Activated CD4-positive, alpha-beta memory T cell treated with anti-CD3 and anti-CD28 coated beads, Interleukin-2, amount 10 ng/mL, durations not matched to agents 7 days and 5 days (primary cell): ENCODE measurements at regions of chr6 and their contacts with region 1.

Region 1: GRCh38 chr6:16731478-16732051 is 29.7 kb downstream of the ATXN1 start:
- DNase-seq: peak; percentile 63
- H3K4me3 Mint-ChIP-seq: peak overlapping the region; percentile 61
- H3K27ac Mint-ChIP-seq: peak overlapping the region; percentile 86
- H3K4me1 Mint-ChIP-seq: peaks cover 75% of the 10 kb centered on the region
- H3K27me3 Mint-ChIP-seq: no peaks in the 10 kb centered on the region

Region 2: DNA sequence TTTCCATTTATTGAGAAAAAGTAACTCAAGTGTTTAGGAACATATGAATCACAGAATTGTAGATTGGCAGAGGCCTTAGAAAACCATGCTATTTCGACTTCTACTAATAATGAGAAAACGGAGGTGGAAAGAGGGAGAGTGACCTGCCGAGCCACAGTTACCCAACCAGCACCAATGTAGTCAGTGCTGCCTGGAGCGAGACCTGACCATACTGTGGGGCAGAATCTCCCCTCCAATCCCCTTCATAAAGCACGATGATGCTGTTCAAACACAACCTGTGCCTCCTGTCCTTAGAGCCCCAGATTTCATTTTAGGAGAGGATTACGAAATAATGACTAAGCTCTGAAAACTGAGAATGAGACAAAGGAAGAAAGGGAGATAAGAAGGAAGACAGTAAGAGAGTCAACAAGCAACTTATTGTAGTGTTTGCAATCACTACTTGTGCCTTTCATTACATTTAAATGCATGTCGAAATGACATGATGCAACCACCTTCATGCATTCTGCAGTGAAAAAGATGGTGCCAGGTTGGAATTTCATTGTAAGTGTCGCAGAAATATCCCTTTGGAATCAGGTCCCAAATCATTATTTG is 40.9 kb before region 1 on chr6:
- CTCF ChIA-PET with region 1: no interaction called
- POLR2A ChIA-PET with region 1: interaction called, 62 read pairs
- DNase-seq: peak; percentile 51
- H3K4me3 Mint-ChIP-seq: peak overlapping the region; percentile 2
- H3K27ac Mint-ChIP-seq: peak overlapping the region; percentile 70
- H3K4me1 Mint-ChIP-seq: peaks cover 86% of the 10 kb centered on the region
- H3K27me3 Mint-ChIP-seq: no peaks in the 10 kb centered on the region

Region 3: DNA sequence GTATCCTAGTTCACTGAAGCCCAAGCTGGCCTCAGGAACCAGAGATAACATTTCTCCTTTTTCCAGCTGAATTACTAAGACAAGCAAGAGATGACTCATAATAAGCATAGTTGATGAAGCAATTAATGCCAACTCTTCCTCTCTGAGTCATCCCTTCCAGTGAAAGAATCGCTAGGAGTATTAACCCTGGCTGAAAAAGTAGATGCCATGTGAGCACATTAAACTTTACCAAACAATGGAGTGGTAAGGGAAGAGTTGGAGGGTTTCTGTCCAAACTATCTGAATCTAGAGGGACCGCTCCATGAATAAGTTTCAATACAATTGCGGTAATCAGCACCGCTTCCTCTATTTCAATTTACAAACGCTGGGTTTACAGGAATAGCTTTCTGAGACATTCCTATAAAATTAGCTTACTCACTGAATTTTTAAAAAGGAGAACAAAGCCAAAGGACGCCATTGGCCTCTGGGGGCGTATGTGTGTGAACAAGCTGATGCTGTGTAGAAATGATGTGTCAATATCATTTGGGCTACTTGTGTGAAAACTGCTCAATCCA is 18.6 kb before region 1 on chr6:
- CTCF ChIA-PET with region 1: interaction called, 18 read pairs
- POLR2A ChIA-PET with region 1: interaction called, 94 read pairs
- DNase-seq: no peak
- H3K4me3 Mint-ChIP-seq: peak overlapping the region; percentile 66
- H3K27ac Mint-ChIP-seq: peak overlapping the region; percentile 97
- H3K4me1 Mint-ChIP-seq: peaks cover 70% of the 10 kb centered on the region
- H3K27me3 Mint-ChIP-seq: no peaks in the 10 kb centered on the region